ENCODE measurements at regions of chr19 and their contacts with region 1.

Region 1: DNA sequence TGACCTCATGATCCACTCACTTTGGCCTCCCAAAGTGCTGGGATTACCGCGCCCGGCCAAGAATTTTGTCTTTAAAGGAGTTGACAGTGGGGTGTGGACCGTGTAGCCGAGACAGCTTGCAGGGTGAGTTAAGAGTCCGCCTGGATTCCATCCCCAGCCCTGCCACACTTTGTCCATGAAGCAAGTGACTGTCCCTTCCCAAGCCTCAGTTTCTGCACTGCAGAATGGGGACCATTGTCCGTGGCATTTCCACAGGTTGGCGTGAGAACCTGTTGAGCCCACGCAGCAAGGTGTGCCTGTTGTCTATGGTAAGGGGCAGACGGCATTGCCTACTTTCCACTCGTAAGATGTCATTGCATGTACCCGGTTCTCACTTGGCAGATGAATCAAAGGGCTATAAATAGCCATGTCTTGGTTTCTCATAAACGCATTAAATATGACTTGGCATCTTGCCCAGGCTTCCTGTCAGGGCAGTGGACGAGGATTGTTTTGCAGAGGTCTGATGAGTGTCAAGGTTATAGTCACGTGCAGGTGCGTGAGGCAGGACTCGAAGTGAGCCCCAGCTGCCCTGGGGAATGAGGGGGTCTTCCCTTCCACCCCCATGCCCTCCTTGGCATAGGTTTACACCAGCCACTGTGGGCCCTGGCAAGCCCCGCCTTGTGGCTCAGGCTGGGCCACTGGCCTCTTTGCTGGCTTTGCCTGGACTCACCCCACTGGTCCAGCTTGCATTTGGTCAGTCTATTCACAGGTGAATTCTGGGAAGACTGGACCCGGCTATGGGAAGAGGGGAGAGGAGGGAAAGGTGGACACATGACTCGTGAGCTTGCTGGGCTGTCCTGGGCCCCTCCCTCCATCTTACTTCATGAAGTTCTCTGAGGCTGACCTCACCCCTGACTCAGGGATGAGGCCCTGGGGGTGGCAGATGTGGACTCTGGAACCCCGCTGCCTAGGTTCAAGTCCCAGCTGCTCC is 14.6 kb downstream of the FAM187B start:
- DNase-seq: peak; percentile 89 to 96 (median 93)
- H3K4me3 ChIP-seq: peak overlapping the region in 1 of 2 donors; percentile 17
- H3K4me3 Mint-ChIP-seq: peak overlapping the region; percentile 30 to 85 (median 76)
- H3K27ac ChIP-seq: peak overlapping the region; percentile 98
- H3K27ac Mint-ChIP-seq: peak overlapping the region; percentile 98 to 100 (median 100)
- H3K4me1 ChIP-seq: peaks cover 84% of the 10 kb centered on the region
- H3K4me1 Mint-ChIP-seq: peaks cover 40 to 78% (median 61%) of the 10 kb centered on the region in 4 donors
- H3K27me3 ChIP-seq: no peaks in the 10 kb centered on the region
- H3K27me3 Mint-ChIP-seq: no peaks in the 10 kb centered on the region

Region 2: DNA sequence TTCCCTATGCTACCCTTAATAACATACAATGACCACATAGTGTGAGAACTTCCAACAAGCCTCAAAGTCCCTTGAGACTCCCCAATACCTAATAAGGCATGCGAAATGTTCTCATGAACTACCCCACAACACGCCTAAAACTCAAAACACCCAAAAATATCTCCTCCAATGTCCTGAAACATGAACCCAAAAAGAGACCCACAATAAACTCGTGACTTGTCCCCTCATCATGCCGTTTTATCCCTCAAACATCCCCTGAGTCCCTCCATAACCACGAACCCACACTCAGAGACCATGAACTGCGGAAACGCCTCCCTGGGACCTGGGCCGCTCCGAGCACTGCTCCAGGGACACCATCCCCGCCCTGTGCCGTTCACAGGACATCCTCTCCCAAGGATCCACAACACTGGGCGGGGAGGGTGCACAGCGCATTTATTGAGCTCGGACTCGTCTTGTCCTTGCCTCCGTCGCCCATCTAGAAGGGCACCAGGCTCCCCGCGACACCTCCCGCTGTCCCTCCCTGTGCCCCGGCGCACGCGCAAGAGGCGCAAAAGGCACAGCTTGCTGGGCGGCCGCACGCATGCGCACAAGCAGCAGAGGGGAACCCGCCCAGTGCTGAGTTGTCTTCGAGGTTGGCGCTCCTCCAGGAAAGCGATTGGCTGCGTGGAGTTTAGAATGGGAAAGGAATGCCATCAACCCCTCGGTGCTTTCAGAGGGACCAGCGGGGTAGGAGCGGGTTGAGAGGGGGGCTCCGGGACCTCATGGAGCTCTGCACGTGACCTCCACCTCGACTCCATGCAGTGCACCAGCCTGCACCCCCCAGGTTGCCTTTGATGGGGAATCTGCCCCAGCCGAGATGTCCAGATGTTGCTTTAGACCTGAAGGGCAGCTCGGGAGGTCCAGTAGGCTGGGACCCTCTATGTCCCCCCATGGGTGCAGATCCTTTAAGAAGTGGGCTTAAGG is 89.6 kb before region 1 on chr19:
- CTCF ChIA-PET with region 1: no interaction called
- POLR2A ChIA-PET with region 1: interaction called, 12 read pairs
- intact Hi-C with region 1: no loop called
- DNase-seq: peak; percentile 83 to 85 (median 83)
- H3K4me3 ChIP-seq: peak overlapping the region; percentile 40 to 57
- H3K4me3 Mint-ChIP-seq: peak overlapping the region; percentile 77 to 88 (median 84)
- H3K27ac ChIP-seq: peak overlapping the region; percentile 47
- H3K27ac Mint-ChIP-seq: peak overlapping the region; percentile 58 to 90 (median 86)
- H3K4me1 ChIP-seq: peaks cover 13% of the 10 kb centered on the region
- H3K4me1 Mint-ChIP-seq: peaks cover 9 to 16% (median 12%) of the 10 kb centered on the region in 4 donors
- H3K27me3 ChIP-seq: no peaks in the 10 kb centered on the region
- H3K27me3 Mint-ChIP-seq: no peaks in the 10 kb centered on the region

Region 3: GRCh38 chr19:35162471-35163326 is 51.2 kb before region 1 on chr19:
- CTCF ChIA-PET with region 1: no interaction called
- POLR2A ChIA-PET with region 1: interaction called, 105 read pairs
- intact Hi-C with region 1: no loop called
- DNase-seq: no peak
- H3K4me3 ChIP-seq: no peak overlapping the region
- H3K4me3 Mint-ChIP-seq: peak overlapping the region in 1 of 8 donors; percentile 15
- H3K27ac ChIP-seq: no peak overlapping the region
- H3K27ac Mint-ChIP-seq: peak overlapping the region; percentile 36 to 88 (median 70)
- H3K4me1 ChIP-seq: peaks cover 70% of the 10 kb centered on the region
- H3K4me1 Mint-ChIP-seq: peaks cover 31 to 81% (median 61%) of the 10 kb centered on the region in 4 donors
- H3K27me3 ChIP-seq: no peaks in the 10 kb centered on the region
- H3K27me3 Mint-ChIP-seq: no peaks in the 10 kb centered on the region

Region 4: GRCh38 chr19:35224681-35225571 is 11.0 kb after region 1 on chr19:
- CTCF ChIA-PET with region 1: no interaction called
- POLR2A ChIA-PET with region 1: interaction called, 40 read pairs
- intact Hi-C with region 1: no loop called
- DNase-seq: no peak
- H3K4me3 ChIP-seq: no peak overlapping the region
- H3K4me3 Mint-ChIP-seq: no peak overlapping the region
- H3K27ac ChIP-seq: no peak overlapping the region
- H3K27ac Mint-ChIP-seq: peak overlapping the region in 2 of 7 donors; percentile 32 to 35
- H3K4me1 ChIP-seq: peaks cover 44% of the 10 kb centered on the region
- H3K4me1 Mint-ChIP-seq: peaks cover 6 to 45% (median 26%) of the 10 kb centered on the region in 4 donors
- H3K27me3 ChIP-seq: no peaks in the 10 kb centered on the region
- H3K27me3 Mint-ChIP-seq: no peaks in the 10 kb centered on the region

Region 5: GRCh38 chr19:35269421-35270117 is 55.6 kb after region 1 on chr19:
- CTCF ChIA-PET with region 1: interaction called, 4 read pairs
- POLR2A ChIA-PET with region 1: interaction called, 95 read pairs
- intact Hi-C with region 1: loop called (anchors 2 kb)
- DNase-seq: peak; percentile 68 to 74 (median 70)
- H3K4me3 ChIP-seq: peak overlapping the region in 1 of 2 donors; percentile 41
- H3K4me3 Mint-ChIP-seq: peak overlapping the region; percentile 65 to 83 (median 77)
- H3K27ac ChIP-seq: peak overlapping the region; percentile 41
- H3K27ac Mint-ChIP-seq: peak overlapping the region; percentile 61 to 86 (median 77)
- H3K4me1 ChIP-seq: peaks cover 37% of the 10 kb centered on the region
- H3K4me1 Mint-ChIP-seq: peaks cover 20 to 53% (median 38%) of the 10 kb centered on the region in 4 donors
- H3K27me3 ChIP-seq: no peaks in the 10 kb centered on the region
- H3K27me3 Mint-ChIP-seq: no peaks in the 10 kb centered on the region

Measured in CD4-positive, alpha-beta memory T cell (primary cell).